ENCODE measurements at regions of chr13 and their contacts with region 1.

Region 1: DNA sequence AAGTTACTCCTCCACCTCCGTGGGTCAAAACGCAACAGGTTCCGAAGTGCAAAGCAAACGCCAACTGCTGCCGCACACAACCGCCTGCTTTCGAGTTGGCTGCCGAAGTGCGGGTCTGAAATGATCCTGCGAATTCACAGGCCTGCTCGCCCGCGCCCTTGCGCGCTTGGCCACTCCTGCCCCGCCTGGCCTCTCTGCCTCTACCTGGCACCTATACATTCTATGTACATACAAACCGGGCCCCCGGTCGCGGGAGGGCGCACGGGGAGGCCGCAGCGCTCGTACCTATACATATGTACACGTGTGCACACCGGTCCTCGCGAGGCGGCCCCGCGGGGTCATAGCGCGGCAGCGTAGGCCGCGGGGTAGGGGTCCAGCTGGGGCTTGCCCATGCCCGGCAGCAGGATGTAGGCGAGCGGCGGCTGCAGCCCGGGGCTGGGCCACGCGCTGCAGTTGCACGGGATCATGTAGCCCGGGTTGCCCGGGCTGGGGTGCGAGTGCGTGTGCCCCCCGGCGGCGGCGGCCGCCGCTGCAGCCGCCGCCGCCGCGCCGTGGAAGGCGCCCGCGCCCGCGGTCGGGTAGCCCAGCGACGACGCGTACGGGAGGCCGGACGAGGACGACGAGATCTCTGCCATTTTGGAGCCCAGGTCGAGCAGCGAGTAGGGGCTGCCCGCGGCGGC is 1.3 kb downstream of the SOX21 start:
- DNase-seq: peak; percentile 70
- H3K4me3 Mint-ChIP-seq: peak overlapping the region; percentile 65
- H3K27ac Mint-ChIP-seq: peak overlapping the region; percentile 76
- H3K4me1 Mint-ChIP-seq: peaks cover 17% of the 10 kb centered on the region
- H3K27me3 Mint-ChIP-seq: peaks cover 76% of the 10 kb centered on the region

Region 2: DNA sequence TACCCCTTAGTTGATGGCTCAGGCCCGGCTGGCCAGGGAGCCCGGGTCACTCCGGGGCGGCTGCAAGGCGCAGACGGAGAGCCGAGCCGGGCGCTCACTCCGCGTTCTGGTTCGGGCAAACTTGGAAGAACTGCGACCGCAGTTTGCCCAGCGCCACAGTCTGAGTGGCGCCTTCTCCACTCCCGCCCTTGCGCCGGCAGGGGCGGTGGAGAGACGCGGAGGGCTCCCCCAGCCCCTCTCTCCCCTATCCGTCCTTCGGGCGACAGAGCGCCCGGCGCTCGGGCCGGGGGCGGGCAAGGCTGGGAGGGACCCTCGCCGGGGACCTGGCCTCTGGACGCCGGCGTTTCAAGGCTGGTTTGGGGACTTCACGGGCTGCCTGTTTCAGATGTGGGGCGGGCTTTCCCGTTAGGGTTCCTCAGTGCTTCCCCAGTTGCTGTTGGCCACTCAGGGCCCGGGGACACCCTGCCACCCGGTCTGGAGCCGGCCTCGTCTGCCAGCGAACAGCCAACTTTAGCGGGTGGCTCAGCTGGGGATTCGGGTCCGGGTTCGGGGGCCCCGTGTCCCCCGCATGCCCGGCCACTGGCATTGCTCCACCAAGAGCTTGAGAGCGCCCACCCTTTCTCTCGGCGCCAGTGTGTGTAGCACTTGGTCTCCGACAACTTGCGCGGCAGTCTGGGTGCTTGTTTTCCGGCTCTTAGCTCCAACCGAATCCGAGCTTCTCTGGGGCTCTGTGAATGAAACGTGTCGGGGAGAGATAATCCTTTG is 1483.0 kb before region 1 on chr13:
- intact Hi-C with region 1: loop called (anchors 10 kb)
- DNase-seq: no peak
- H3K4me3 Mint-ChIP-seq: no peak overlapping the region
- H3K27ac Mint-ChIP-seq: no peak overlapping the region
- H3K4me1 Mint-ChIP-seq: no peaks in the 10 kb centered on the region
- H3K27me3 Mint-ChIP-seq: peaks cover 42% of the 10 kb centered on the region

Region 3: DNA sequence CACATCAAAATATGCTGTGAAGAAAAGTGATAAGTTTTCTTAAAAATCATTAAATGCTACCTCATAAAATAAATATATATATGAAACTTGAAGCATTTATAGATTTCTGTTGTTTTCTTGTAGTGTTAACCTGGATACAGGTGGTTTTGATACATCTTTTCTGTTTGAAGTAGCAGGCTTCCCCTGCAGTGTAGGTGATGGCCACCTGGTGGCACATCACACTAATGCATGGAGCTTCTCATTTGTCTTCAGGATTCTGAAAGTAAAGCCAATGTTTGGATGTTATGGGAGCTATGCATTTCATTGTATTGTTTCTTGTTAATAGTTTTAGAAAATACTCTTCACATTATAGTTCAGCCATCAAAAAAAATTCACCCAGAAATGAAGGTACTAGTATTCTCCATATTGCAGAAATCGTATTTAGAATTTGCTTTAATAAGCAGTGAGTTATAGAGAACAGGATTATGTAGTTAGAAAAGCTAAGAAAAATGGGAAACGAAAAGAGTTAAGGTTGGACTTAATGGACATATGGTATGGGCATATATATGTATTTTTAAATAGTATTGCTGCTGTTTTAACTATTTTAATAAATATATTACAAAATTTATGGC is 90.6 kb before region 1 on chr13:
- intact Hi-C with region 1: loop called (anchors 5 kb)
- DNase-seq: peak; percentile 78
- H3K4me3 Mint-ChIP-seq: no peak overlapping the region
- H3K27ac Mint-ChIP-seq: no peak overlapping the region
- H3K4me1 Mint-ChIP-seq: peaks cover 8% of the 10 kb centered on the region
- H3K27me3 Mint-ChIP-seq: no peaks in the 10 kb centered on the region

Region 4: DNA sequence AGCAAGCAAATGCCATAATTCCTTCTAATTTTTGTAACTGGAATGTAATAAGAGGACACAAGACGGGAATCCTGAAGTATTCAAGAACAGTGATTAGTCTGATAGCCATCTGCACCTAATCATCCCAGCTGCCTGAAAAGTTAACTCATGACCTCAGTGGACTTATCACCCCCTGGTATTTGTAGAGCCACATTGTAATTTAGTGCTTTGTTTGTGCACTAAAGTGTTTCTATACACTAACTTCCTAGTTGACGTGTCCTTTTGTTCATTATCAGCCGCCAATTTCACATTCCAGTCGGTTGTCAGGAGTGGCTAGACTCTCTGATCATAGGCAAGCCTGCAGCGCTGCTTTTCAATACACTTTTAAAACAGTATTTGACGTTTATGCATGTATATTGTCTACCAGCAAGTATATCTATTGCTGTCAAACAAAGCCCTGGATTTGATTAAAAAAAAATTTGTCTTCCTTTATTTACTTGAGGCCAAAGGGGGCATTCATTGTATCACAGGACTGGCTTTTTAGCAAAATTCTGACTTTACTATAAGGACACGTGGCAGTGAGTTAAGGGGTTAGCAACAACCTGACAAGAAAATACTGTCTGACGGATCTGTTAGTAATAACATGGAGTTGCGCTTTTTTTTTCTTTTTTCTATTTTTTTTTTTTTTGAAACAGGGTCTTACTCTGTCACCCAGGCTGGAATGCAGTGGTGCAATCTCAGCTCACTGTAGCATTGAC is 11.8 kb after region 1 on chr13:
- intact Hi-C with region 1: no loop called
- DNase-seq: no peak
- H3K4me3 Mint-ChIP-seq: no peak overlapping the region
- H3K27ac Mint-ChIP-seq: no peak overlapping the region
- H3K4me1 Mint-ChIP-seq: no peaks in the 10 kb centered on the region
- H3K27me3 Mint-ChIP-seq: peaks cover 4% of the 10 kb centered on the region

Region 5: DNA sequence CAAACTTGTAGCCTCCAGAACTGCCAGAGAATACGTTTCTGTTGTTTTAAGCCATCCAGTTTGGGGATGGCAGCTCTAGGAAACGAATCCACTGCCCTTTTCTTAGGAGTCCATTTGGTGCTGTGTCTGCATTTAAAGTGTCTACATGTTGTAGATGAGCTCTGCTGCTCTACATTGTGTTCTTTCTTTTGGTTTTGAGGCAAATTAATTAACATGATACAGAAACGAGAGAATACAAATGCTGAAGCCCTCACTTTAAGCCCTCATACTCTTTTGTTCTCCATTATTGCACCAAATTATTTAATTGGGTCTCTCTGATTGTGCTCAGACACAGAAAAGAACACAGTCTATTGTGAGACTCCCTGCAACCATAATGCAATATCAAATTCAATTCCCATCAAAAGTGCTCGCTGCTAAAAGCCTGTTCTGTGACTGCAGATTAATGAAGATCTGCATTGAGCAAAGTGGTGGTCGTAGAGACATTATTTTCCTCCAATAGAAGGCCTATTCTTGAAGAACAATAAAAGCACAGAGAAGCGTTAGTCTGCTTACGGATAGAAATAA is 167.7 kb after region 1 on chr13:
- intact Hi-C with region 1: no loop called
- DNase-seq: no peak
- H3K4me3 Mint-ChIP-seq: no peak overlapping the region
- H3K27ac Mint-ChIP-seq: no peak overlapping the region
- H3K4me1 Mint-ChIP-seq: no peaks in the 10 kb centered on the region
- H3K27me3 Mint-ChIP-seq: no peaks in the 10 kb centered on the region

Region 6: DNA sequence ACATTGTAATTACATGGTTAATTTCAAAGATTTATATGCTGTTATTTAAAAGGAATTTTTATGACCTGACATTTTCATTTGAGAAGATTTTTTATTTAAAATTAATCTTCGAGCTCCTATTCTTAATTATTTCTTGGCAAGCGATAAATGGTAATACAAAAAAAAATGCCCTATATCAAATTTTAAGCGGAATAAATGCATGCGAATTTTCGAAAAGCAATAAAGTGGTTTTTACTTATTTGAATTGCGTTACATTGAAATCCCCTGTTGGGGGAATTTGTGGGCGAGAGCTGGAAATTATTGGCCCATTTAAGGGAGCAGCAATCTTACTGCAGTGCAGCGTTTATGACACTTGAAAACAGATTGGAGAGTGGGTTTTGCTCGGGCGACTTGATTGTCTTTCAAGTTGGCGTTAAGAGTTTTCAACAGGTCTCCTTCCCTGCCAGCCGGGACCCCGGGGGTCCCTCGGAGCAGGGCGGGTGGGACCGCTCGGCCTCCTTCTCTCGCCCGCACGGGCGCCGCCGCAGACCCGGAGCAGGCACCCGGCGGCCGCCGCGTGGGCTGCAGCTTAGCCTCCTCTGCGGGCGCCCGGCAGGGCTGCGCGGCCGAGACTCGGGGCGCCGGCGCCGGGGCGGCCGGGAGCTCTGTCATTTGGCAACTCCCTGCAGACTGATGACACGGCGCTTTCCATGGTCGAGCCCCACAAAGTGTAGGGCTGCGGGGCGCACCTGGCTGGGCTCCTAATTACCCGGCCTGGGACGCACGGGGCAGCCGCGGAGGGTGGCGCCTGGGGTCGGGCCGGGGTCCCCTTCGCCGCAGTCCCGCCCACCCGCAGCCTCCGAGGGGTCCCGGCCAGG is 256.4 kb after region 1 on chr13:
- intact Hi-C with region 1: loop called (anchors 5 kb)
- DNase-seq: peak; percentile 60
- H3K4me3 Mint-ChIP-seq: no peak overlapping the region
- H3K27ac Mint-ChIP-seq: no peak overlapping the region
- H3K4me1 Mint-ChIP-seq: peaks cover 2% of the 10 kb centered on the region
- H3K27me3 Mint-ChIP-seq: peaks cover 59% of the 10 kb centered on the region

Region 7: GRCh38 chr13:94987869-94988268 is 276.8 kb after region 1 on chr13:
- intact Hi-C with region 1: no loop called
- DNase-seq: no peak
- H3K4me3 Mint-ChIP-seq: no peak overlapping the region
- H3K27ac Mint-ChIP-seq: no peak overlapping the region
- H3K4me1 Mint-ChIP-seq: no peaks in the 10 kb centered on the region
- H3K27me3 Mint-ChIP-seq: peaks cover 7% of the 10 kb centered on the region

Region 8: GRCh38 chr13:95552539-95553441 is 841.8 kb after region 1 on chr13 and contains the start of gene CLDN10:
- intact Hi-C with region 1: loop called (anchors 10 kb)
- DNase-seq: no peak
- H3K4me3 Mint-ChIP-seq: peak within 1 kb of the TSS; percentile 48
- H3K27ac Mint-ChIP-seq: no peak within 1 kb of the TSS
- H3K4me1 Mint-ChIP-seq: peaks cover 3% of the 10 kb centered on the region
- H3K27me3 Mint-ChIP-seq: peaks cover 58% of the 10 kb centered on the region
- total RNA-seq, gene CLDN10: not detected in 2 replicates

Measured in activated CD4-positive, alpha-beta T cell treated with anti-CD3 and anti-CD28 coated beads, Interleukin-2, amount 10 ng/mL, durations not matched to agents 24 days and 14 days (primary cell).